ENCODE measurements at regions of chr4 and their contacts with region 1.

Region 1: DNA sequence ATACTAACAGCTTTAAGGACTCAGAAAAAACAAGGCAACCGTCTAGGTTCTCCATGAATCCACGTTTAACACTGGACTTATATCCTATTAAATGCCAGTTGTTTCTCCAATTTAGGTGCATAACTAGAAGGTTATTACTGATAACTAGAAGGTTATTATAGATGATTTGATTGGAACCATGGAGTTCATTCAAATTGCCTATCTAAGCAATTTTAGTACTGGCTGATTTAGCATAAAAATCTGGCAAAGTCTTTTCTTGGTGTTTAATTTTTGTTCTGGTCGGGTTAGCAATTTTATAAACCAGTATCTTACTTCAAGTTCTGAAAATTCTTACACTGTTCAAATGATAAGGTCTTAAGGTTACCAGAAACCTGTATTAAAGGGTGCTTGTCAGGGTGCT is 672.8 kb upstream of the GNPDA2 start:
- DNase-seq: no peak

Region 2: GRCh38 chr4:43959976-43960375 is 1439.1 kb before region 1 on chr4:
- intact Hi-C with region 1: loop called in 1 of 2 experiments (anchors 10 kb)
- DNase-seq: no peak

Region 3: DNA sequence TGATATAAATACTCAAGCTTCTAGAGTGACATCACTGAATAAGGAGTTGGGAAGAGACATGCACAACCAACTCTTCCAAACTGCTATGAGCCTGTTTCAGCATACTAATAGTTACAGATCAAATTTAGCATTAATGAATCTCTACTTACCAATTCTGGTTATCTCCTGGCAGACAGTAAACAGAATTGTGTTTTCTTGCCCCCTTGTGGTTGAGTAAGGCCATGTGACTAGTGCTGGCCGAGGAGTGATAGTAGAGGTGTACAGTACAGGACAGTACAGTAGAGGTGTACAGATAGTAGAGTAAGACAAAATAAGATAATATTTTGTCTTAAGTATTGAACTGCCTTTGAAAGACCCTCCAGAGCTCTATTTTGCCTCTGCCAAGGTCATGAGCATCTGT is 43.4 kb after region 1 on chr4:
- intact Hi-C with region 1: no loop called
- DNase-seq: no peak

Measured in posterior vena cava (tissue), 2 donors.